HEK293 (cell line): ENCODE measurements at regions of chr6 and their contacts with region 1.

Region 1: GRCh38 chr6:12233693-12234571 is 56.2 kb upstream of the EDN1 start:
- H3K4me3 ChIP-seq: no peak overlapping the region
- H3K27ac ChIP-seq: no peak overlapping the region
- H3K4me1 ChIP-seq: no peaks in the 10 kb centered on the region
- CTCF ChIP-seq: peak; percentile 80

Region 2: DNA sequence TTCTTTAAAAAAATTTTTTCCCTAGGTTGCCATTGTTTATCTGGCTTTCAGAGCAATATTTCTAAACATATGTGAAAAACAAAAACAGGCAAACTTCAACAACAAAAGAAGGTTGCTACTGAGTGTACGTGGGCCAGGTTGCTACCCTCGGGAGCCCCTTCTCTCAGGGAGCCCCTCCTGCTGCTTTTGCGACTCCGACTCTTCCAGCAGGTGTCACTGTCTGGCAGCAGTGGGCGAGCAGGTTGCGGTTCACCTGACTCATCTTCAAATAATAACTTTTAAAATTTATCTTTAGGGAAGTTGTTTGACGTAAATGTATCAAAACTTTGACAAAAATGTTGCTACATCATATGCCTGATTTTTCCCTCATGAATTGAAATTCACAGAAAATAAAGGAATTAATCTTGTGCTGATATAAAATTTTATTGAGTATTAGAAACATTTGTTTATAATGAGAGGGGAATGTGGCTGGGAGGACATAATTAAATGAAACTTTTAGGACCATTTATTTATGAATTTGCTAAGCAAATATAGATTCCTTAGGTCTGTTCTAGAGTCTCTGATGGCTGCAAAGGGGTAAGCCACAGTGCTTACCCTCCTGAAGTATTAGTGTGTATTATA is 83.0 kb before region 1 on chr6:
- CTCF ChIA-PET with region 1: interaction called, 13 read pairs
- POLR2A ChIA-PET with region 1: no interaction called
- H3K4me3 ChIP-seq: no peak overlapping the region
- H3K27ac ChIP-seq: no peak overlapping the region
- H3K4me1 ChIP-seq: no peaks in the 10 kb centered on the region
- CTCF ChIP-seq: peak; percentile 32; the same call in 1 of the 2 replicates

Region 3: GRCh38 chr6:12203001-12203400 is 30.9 kb before region 1 on chr6:
- CTCF ChIA-PET with region 1: interaction called, 10 read pairs
- POLR2A ChIA-PET with region 1: no interaction called
- H3K4me3 ChIP-seq: no peak overlapping the region
- H3K27ac ChIP-seq: no peak overlapping the region
- H3K4me1 ChIP-seq: no peaks in the 10 kb centered on the region
- CTCF ChIP-seq: no peak